SK-N-SH (cell line): ENCODE measurements at regions of chr2 and their contacts with region 1.

Region 1: GRCh38 chr2:49661809-49662208 is 507.5 kb upstream of the FSHR start:
- DNase-seq: no peak
- H3K4me3 ChIP-seq: no peak overlapping the region
- H3K27ac ChIP-seq: no peak overlapping the region
- H3K4me1 ChIP-seq: no peaks in the 10 kb centered on the region; a peak in 1 of 4 replicates
- H3K27me3 ChIP-seq: no peaks in the 10 kb centered on the region
- CTCF ChIP-seq: no peak
- EP300 ChIP-seq: no peak
- RAD21 ChIP-seq: no peak

Region 2: DNA sequence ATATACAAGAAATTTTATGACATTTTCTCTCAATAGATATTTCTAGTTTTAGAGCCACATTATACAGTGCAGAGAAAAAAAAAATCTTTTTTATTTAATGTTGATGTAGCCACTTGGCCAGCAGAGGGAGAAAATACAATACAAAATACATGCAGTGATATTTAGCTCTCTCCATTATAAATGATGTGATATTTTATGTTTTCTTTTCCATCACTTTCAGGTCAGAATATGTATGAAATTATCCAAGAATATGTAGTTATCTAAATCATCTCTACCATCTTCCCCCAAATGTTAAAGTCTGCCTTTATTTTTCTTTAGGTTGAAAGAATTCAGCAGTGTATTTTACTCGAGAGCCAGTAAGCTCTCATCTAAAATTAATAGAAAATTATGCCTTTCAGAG is 26.1 kb after region 1 on chr2:
- CTCF ChIA-PET with region 1: interaction called, 11 read pairs
- POLR2A ChIA-PET with region 1: no interaction called
- DNase-seq: no peak
- H3K4me3 ChIP-seq: peak overlapping the region in 1 of 2 experiments; percentile 16; a peak in 1 of 4 replicates
- H3K27ac ChIP-seq: no peak overlapping the region
- H3K4me1 ChIP-seq: no peaks in the 10 kb centered on the region
- H3K27me3 ChIP-seq: no peaks in the 10 kb centered on the region
- CTCF ChIP-seq: peak; percentile 60
- EP300 ChIP-seq: no peak
- RAD21 ChIP-seq: peak; percentile 67